Naive thymus-derived CD4-positive, alpha-beta T cell (primary cell): ENCODE measurements at regions of chr5 and their contacts with region 1.

Region 1: DNA sequence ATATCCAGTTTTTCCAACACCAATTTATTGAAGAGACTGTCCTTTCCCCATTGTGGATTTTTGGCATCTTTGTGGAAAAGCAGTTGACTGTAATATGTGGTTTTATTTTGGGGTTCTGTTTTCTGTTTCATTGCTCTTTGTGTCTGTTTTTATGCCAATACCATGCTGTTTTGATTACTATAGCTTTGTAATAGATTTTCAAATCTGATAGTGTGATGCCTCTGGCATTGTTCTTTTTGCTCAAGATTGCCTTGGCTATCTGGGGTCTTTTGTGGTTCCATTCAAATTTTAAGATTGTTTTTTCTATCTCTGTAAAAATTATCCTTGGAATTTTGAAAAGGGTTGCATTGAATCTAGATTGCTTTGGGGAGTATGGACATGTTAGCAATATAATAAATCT is 99.5 kb downstream of the NDUFAF2 start:
- DNase-seq: no peak
- ATAC-seq: no peak
- H3K4me3 ChIP-seq: no peak overlapping the region
- H3K4me3 Mint-ChIP-seq: no peak overlapping the region
- H3K27ac ChIP-seq: no peak overlapping the region
- H3K27ac Mint-ChIP-seq: no peak overlapping the region
- H3K4me1 ChIP-seq: no peaks in the 10 kb centered on the region
- H3K4me1 Mint-ChIP-seq: peaks cover 0 to 4% (median 0%) of the 10 kb centered on the region in 7 donors
- H3K27me3 ChIP-seq: no peaks in the 10 kb centered on the region
- H3K27me3 Mint-ChIP-seq: no peaks in the 10 kb centered on the region

Region 2: DNA sequence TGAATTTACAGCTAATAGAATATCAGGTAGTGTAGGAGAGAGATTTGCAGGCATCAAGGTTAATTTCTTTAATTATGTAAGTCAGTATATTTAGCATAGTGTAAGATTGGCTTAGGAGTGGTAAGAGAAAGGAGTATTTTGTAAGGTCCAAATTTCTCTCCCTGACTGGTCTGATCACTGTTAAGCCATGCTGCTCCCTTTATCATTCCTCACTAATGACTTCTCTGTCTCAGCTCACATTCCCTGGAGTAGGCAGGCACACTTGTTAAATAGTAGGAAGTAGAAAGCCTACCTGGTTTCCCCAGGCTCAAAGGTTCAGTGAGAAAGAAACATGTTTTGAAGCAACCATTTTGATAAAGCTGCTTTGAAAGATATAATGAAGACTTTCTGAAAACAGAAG is 27.0 kb after region 1 on chr5:
- CTCF ChIA-PET with region 1: no interaction called
- POLR2A ChIA-PET with region 1: no interaction called
- intact Hi-C with region 1: no loop called
- DNase-seq: no peak
- ATAC-seq: no peak
- H3K4me3 ChIP-seq: no peak overlapping the region
- H3K4me3 Mint-ChIP-seq: no peak overlapping the region
- H3K27ac ChIP-seq: no peak overlapping the region
- H3K27ac Mint-ChIP-seq: no peak overlapping the region
- H3K4me1 ChIP-seq: no peaks in the 10 kb centered on the region
- H3K4me1 Mint-ChIP-seq: peaks cover 2 to 8% (median 4%) of the 10 kb centered on the region in 7 donors
- H3K27me3 ChIP-seq: no peaks in the 10 kb centered on the region
- H3K27me3 Mint-ChIP-seq: no peaks in the 10 kb centered on the region

Region 3: GRCh38 chr5:61280205-61280604 is 235.7 kb after region 1 on chr5:
- CTCF ChIA-PET with region 1: no interaction called
- POLR2A ChIA-PET with region 1: no interaction called
- intact Hi-C with region 1: loop called in 1 of 2 experiments (anchors 2 kb)
- DNase-seq: peak in 4 of 9 donors; percentile 19 to 28 (median 25)
- ATAC-seq: no peak
- H3K4me3 ChIP-seq: no peak overlapping the region
- H3K4me3 Mint-ChIP-seq: no peak overlapping the region
- H3K27ac ChIP-seq: no peak overlapping the region
- H3K27ac Mint-ChIP-seq: peak overlapping the region in 1 of 9 donors; percentile 2
- H3K4me1 ChIP-seq: peaks cover 0 to 5% of the 10 kb centered on the region in 2 donors
- H3K4me1 Mint-ChIP-seq: peaks cover 16 to 37% (median 21%) of the 10 kb centered on the region in 7 donors
- H3K27me3 ChIP-seq: no peaks in the 10 kb centered on the region
- H3K27me3 Mint-ChIP-seq: no peaks in the 10 kb centered on the region

Region 4: GRCh38 chr5:61631438-61631941 is 586.9 kb after region 1 on chr5:
- CTCF ChIA-PET with region 1: no interaction called
- POLR2A ChIA-PET with region 1: no interaction called
- intact Hi-C with region 1: no loop called
- DNase-seq: no peak
- ATAC-seq: no peak
- H3K4me3 ChIP-seq: no peak overlapping the region
- H3K4me3 Mint-ChIP-seq: no peak overlapping the region
- H3K27ac ChIP-seq: no peak overlapping the region
- H3K27ac Mint-ChIP-seq: no peak overlapping the region
- H3K4me1 ChIP-seq: no peaks in the 10 kb centered on the region
- H3K4me1 Mint-ChIP-seq: peaks cover 0 to 14% (median 7%) of the 10 kb centered on the region in 7 donors
- H3K27me3 ChIP-seq: no peaks in the 10 kb centered on the region
- H3K27me3 Mint-ChIP-seq: peaks cover 19 to 38% (median 21%) of the 10 kb centered on the region in 5 donors